PC-3 (cell line): ENCODE measurements at regions of chr18 and their contacts with region 1.

Region 1: DNA sequence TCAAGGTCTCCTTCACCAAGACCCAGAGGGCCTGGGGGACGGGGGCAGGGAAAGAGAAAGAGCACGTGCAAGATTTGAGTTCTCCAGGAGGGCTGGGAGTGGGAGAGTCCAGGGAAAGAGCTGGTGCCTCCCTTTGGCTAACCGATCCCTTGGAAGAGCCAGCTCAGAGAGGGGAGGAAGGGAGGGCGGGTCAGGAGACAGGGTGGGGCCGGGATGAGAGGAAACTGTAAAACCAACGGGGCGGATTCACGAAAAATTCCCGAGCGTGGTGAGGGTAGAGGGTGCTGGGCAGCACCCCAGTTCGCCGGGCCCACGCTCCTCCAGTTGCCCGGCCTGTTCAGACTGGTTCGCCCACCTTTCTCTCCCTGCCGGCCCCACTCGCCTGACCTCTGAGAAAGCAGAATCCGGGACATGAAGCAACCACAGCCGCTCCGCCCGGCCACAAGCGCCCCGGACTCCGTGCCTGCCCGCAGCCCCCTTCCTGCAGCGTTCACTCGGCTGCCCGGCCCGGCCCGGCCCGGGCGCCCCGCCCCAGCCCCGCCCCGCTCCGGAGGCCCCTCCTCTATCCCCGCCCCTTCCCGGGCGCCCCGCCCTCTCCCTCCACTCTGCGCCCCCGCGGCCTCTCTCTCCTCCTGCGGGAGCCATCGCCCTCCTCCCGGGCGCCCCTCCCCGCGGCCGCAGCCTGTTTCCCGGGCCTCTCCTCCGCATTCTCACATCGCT is 230.9 kb upstream of the SMAD2 start:
- DNase-seq: peak; percentile 62
- ATAC-seq: peak; percentile 87
- H3K4me3 ChIP-seq: peak overlapping the region; percentile 61
- H3K27ac ChIP-seq: peak overlapping the region; percentile 71
- H3K4me1 ChIP-seq: no peaks in the 10 kb centered on the region
- H3K27me3 ChIP-seq: no peaks in the 10 kb centered on the region
- CTCF ChIP-seq: no peak

Region 2: DNA sequence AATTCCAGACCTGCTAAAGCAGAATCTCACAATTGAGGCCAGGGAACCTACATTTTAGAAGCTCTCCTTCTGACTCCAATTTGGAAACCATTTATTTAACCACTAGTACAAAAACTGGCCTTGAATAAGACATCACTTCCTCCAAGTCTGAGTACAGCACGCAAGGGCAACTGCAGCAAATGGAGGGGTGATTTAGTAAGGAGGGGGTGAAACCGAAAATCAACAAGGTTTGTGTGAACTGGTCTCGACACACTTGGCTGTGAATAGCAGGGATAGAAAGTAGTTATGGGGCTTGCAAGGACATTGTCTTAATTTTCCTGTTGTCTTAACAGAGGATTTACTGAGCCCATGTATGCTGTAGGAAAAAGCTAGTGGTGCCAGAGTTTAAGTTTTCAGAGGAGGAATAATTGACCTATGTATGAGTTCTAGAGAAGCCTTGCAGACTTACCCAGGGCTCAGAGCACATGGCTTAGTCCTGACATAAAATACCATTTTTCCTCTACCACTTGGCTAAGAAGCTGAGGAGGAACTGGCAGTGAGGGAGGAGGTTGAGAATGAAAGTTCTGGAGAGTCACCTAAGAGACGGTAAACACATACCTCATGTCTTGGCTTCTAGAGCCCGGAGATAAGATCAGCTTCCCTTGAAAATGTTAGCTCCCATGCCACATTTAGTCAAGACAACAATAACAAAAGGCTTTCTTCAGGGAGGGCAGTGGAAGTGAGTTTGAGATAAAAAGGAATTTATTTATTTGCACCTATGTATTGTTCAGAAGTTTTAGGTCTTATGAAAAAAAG is 345.7 kb before region 1 on chr18:
- CTCF ChIA-PET with region 1: no interaction called
- POLR2A ChIA-PET with region 1: interaction called, 21 read pairs
- intact Hi-C with region 1: no loop called
- DNase-seq: no peak
- ATAC-seq: no peak
- H3K4me3 ChIP-seq: no peak overlapping the region
- H3K27ac ChIP-seq: no peak overlapping the region
- H3K4me1 ChIP-seq: no peaks in the 10 kb centered on the region
- H3K27me3 ChIP-seq: no peaks in the 10 kb centered on the region
- CTCF ChIP-seq: no peak

Region 3: GRCh38 chr18:47936975-47937374 is 224.4 kb before region 1 on chr18:
- CTCF ChIA-PET with region 1: no interaction called
- POLR2A ChIA-PET with region 1: no interaction called
- intact Hi-C with region 1: no loop called
- DNase-seq: no peak
- ATAC-seq: no peak
- H3K4me3 ChIP-seq: no peak overlapping the region
- H3K27ac ChIP-seq: no peak overlapping the region
- H3K4me1 ChIP-seq: no peaks in the 10 kb centered on the region
- H3K27me3 ChIP-seq: no peaks in the 10 kb centered on the region
- CTCF ChIP-seq: no peak

Region 4: DNA sequence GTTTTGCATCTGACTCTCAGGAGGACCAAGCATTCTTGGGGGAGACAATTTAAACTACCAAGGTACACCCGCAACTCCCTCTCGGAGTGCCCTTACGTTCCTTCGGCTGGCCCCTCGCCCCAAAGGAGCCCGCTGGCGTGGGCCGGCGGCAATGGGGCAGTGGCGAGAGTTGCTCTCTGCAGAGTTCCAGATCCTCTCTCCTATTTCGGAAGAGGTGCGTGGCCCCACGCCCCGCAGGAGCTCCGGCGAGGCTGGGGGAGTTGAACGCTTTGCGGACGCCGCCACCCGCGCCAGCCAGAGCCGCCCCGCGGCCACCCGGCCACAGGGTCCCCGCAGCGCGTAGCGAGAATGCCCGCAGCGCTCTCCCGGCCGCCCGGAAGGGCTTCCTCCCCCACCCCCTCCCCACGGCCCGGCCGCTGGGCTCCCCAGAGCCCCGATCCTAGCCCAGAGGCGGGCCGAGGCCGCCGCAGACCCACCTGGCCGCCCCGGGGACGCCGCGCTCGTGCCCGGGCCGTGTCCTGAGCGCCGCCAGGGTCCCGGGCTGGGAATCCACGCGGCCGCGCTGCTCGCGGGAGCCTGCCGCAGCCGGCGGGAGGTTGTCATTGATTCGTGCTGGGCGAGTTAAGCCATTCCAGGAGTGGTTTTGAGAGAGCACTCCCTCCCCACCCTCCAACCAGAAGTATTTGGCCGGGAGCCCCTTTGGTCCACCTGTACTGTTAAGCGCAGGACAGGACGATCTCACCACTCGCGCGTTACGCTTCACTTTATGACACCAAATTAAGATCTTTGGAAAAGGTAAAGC is 24.6 kb before region 1 on chr18:
- CTCF ChIA-PET with region 1: no interaction called
- POLR2A ChIA-PET with region 1: no interaction called
- intact Hi-C with region 1: loop called (anchors 1 kb)
- DNase-seq: no peak
- ATAC-seq: peak; percentile 13
- H3K4me3 ChIP-seq: peak overlapping the region; percentile 67
- H3K27ac ChIP-seq: peak overlapping the region; percentile 50
- H3K4me1 ChIP-seq: peaks cover 31% of the 10 kb centered on the region
- H3K27me3 ChIP-seq: no peaks in the 10 kb centered on the region
- CTCF ChIP-seq: no peak

Region 5: DNA sequence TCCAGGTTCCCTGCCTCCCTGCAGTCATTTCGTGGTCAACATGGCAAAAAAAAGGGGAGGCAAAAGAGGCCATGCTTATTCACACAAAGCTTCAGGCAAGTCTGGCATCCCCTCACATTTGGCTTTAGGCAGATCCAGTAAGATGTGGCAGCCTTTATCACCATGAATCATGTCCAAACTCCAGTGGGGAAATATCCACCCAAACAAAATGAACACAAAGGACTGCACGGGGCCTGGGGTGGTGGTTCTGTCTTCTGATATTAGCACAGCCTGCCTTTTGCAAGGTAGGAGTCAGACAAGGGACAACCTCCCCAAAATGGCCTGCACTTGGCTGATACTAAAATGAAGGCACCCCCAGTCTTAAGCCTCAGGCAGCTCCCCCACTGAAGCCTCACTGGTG is 118.0 kb after region 1 on chr18:
- CTCF ChIA-PET with region 1: interaction called, 10 read pairs
- POLR2A ChIA-PET with region 1: no interaction called
- intact Hi-C with region 1: no loop called
- DNase-seq: no peak
- ATAC-seq: no peak
- H3K4me3 ChIP-seq: no peak overlapping the region
- H3K27ac ChIP-seq: no peak overlapping the region
- H3K4me1 ChIP-seq: no peaks in the 10 kb centered on the region
- H3K27me3 ChIP-seq: no peaks in the 10 kb centered on the region
- CTCF ChIP-seq: no peak

Region 6: DNA sequence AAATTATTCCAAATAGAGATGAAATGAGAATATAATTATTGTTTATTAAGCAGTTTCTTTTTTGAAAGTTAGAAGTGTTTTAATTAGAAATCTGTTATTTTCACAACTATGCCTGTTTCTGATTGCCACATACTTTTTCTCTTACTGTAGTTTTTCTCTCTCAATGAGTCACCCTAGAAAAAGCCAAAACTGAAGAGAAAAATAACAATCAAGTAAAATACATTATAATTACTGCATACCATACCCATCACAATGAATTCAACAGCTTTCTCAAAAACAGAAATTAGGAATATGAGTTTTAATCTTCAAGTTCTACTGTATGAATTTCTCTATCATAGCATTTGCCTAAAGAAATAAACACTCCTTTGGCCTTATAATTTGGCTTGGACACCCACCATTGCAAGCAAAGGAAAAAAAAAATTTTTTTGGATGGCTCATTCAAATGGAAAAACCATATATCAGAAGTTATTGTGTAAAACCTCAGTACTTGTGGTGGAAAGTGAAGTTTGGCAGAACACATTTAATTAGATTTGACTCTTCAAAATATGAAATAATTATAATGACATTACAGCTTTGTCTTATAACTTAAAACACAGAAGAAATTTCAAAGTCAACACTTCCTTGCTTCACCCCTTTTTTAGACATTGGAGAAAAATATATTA is 1160.6 kb after region 1 on chr18:
- CTCF ChIA-PET with region 1: no interaction called
- POLR2A ChIA-PET with region 1: no interaction called
- intact Hi-C with region 1: no loop called
- DNase-seq: no peak
- ATAC-seq: no peak
- H3K4me3 ChIP-seq: no peak overlapping the region
- H3K27ac ChIP-seq: no peak overlapping the region
- H3K4me1 ChIP-seq: peaks cover 5% of the 10 kb centered on the region; the same call in 1 of the 2 replicates
- H3K27me3 ChIP-seq: no peaks in the 10 kb centered on the region
- CTCF ChIP-seq: no peak